Aorta (tissue), 5 donors: ENCODE measurements at regions of chr19 and their contacts with region 1.

Region 1: DNA sequence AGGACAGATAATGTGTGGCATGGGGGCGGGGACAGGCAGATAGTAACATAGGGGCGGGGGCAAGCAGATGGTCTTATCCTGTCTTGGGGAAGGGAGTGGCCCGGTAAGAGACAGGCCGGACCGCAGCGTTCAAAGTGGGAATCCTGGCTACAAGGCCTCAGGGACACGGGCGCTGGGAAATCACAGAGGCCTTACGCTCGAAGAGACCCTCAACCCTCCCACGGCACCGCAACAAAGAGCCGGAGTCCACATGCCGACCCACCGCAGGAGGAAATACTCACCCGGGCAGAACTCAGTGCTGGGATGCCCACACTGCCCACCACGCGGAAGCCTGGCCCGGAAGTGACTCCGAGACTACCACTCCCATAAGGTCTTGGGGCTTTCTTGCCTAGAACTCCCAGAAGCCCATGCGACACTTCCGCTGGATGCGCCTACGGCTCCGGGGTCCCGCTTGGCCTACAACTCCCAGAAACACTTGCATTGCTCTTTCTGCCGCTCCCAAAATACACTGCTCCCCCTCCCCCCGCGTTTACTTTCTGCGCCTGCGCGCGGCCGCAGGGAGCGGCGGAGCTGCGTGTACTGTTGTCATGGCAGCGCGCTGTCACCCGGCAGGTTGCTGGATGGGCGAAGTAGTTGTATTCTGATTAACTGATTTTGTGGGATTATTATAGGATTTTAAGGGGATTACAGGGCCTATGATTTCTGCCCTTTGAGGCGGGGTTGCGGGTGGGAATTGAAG is at the start of gene CTU1:
- DNase-seq: peak; percentile 98 to 99
- ATAC-seq: peak; percentile 99
- H3K4me3 ChIP-seq: peak within 1 kb of the TSS; percentile 49 to 65
- H3K27ac ChIP-seq: no peak within 1 kb of the TSS
- H3K4me1 ChIP-seq: no peaks in the 10 kb centered on the region
- H3K27me3 ChIP-seq: peaks cover 0 to 2% of the 10 kb centered on the region in 2 donors
- total RNA-seq, gene CTU1: 4.1 to 5.4 TPM

Region 2: DNA sequence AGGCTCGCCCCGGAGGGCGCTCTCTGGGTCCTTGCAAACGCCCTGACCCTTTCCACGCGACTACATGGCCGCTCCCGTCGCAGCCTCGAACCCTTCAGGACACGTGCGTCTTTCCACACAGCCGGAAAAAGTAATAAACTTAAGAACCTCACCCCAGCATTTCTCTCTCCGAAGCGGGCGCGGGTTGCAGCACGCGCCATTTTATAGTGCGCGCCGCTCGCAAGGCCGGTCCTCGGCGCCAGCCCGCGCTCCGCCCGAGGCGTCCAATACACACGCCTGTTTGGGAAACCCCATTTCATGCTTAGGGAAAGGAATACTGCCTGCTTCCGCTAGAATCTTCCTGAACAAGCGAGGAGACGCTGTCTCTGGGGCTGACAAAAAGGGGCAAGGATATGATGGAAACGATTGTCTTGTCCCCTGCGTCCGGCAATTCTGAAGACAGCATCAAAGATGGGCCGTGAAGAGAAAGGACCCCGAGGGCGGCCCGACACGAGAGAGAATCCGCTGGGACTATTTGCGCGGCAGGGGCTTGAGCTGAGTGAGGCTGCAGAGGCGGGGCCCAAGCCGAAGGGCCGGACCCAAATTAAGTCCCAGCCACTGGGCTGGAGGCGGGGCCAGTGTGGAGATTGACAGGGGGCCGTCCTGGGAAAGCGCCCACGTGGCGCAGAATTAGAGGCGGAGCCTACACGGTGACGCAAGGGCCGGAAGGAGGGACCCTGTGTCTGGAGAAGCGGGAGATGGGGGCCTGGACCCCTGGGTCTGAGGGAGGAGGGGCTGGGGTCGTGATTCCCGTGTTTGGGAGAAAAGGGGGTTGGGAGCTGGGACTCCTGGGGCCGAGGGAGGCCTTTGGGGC is 303.6 kb before region 1 on chr19:
- intact Hi-C with region 1: loop called in 1 of 2 experiments (anchors 10 kb)
- DNase-seq: peak; percentile 99
- ATAC-seq: peak; percentile 99
- H3K4me3 ChIP-seq: peak overlapping the region; percentile 69
- H3K27ac ChIP-seq: peak overlapping the region in 1 of 2 donors; percentile 93
- H3K4me1 ChIP-seq: no peaks in the 10 kb centered on the region
- H3K27me3 ChIP-seq: no peaks in the 10 kb centered on the region